Dendritic cell treated with granulocyte-macrophage colony-stimulating factor and Interleukin-4, amounts not matched to agents 40 ng/mL and 50 ng/mL, for 4 days (primary cell): ENCODE measurements at regions of chr18 and their contacts with region 1.

Region 1: GRCh38 chr18:21004726-21005125 is 106.9 kb downstream of the ROCK1 start:
- H3K4me3 Mint-ChIP-seq: no peak overlapping the region
- H3K27ac Mint-ChIP-seq: no peak overlapping the region
- H3K4me1 Mint-ChIP-seq: peaks cover 6% of the 10 kb centered on the region
- H3K27me3 Mint-ChIP-seq: no peaks in the 10 kb centered on the region

Region 2: GRCh38 chr18:20966795-20967194 is 37.9 kb before region 1 on chr18:
- intact Hi-C with region 1: loop called (anchors 5 kb)
- H3K4me3 Mint-ChIP-seq: no peak overlapping the region
- H3K27ac Mint-ChIP-seq: no peak overlapping the region
- H3K4me1 Mint-ChIP-seq: no peaks in the 10 kb centered on the region
- H3K27me3 Mint-ChIP-seq: no peaks in the 10 kb centered on the region

Region 3: GRCh38 chr18:21031845-21032244 is 27.1 kb after region 1 on chr18:
- intact Hi-C with region 1: no loop called
- H3K4me3 Mint-ChIP-seq: no peak overlapping the region
- H3K27ac Mint-ChIP-seq: peak overlapping the region; percentile 10
- H3K4me1 Mint-ChIP-seq: peaks cover 11% of the 10 kb centered on the region
- H3K27me3 Mint-ChIP-seq: no peaks in the 10 kb centered on the region